GM23248 (cell line): ENCODE measurements at regions of chr15 and their contacts with region 1.

Region 1: DNA sequence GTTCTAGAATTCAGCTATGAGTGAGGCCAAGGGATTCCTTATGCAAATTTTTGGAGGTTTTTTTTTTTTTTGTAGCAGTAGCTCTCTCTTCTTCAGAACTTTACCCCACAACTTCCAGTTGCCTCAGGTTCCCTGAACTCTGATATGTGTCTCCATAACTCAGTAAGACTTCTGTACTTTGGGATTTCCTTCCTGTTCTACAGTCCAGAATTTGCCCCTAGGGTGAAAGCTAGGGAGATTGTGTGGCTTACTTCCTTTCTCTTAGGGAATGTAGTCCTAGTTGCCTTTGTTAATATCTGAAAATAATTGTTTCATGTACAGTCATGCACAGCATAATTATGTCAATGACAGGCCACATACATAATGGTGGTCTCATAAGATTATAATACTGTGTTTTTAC is 30.8 kb downstream of the LRRC28 start:
- DNase-seq: no peak
- H3K4me3 ChIP-seq: no peak overlapping the region
- H3K27ac ChIP-seq: no peak overlapping the region
- H3K4me1 ChIP-seq: peaks cover 4% of the 10 kb centered on the region; the same call in 1 of the 2 replicates
- H3K27me3 ChIP-seq: no peaks in the 10 kb centered on the region

Region 2: GRCh38 chr15:99704444-99704838 is 422.3 kb after region 1 on chr15:
- in situ Hi-C with region 1: loop called (anchors 10 kb)
- DNase-seq: peak; percentile 88
- H3K4me3 ChIP-seq: no peak overlapping the region
- H3K27ac ChIP-seq: peak overlapping the region; percentile 80
- H3K4me1 ChIP-seq: peaks cover 43% of the 10 kb centered on the region
- H3K27me3 ChIP-seq: no peaks in the 10 kb centered on the region